Left ventricle myocardium superior (tissue), 1 donor: ENCODE measurements at regions of chr1 and their contacts with region 1.

Region 1: DNA sequence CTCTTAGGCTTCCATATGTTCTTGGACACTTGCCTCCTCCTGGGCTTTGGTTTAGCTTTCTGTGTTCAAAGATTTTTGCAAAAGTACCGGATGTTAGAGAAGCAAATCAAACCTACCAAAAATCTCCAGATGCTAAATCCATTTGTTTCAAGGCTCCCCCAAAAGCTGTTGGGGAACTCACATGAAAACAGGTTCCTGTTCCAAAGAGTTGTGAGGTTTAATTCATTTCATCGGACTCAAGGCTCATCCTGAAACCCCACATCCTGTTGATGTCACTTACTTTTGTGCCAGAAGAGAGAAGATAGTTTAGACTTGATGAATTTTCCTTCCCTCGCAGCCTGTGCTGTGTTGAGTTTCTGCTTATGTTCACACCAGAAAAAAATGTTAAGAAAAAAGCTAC is 41.7 kb upstream of the RXRG start:
- DNase-seq: no peak
- ATAC-seq: no peak

Region 2: GRCh38 chr1:165162671-165163241 is 323.9 kb before region 1 on chr1:
- intact Hi-C with region 1: no loop called
- DNase-seq: no peak
- ATAC-seq: no peak

Region 3: GRCh38 chr1:165424454-165425216 is 62.0 kb before region 1 on chr1:
- intact Hi-C with region 1: no loop called
- DNase-seq: peak; percentile 49
- ATAC-seq: peak; percentile 88

Region 4: GRCh38 chr1:165444897-165445370 is 41.7 kb before region 1 on chr1 and contains the start of gene RXRG:
- intact Hi-C with region 1: loop called (anchors 5 kb)
- DNase-seq: peak; percentile 70
- ATAC-seq: peak; percentile 70
- total RNA-seq, gene RXRG: 2.2 TPM